ENCODE measurements at regions of chr10 and their contacts with region 1.

Region 1: DNA sequence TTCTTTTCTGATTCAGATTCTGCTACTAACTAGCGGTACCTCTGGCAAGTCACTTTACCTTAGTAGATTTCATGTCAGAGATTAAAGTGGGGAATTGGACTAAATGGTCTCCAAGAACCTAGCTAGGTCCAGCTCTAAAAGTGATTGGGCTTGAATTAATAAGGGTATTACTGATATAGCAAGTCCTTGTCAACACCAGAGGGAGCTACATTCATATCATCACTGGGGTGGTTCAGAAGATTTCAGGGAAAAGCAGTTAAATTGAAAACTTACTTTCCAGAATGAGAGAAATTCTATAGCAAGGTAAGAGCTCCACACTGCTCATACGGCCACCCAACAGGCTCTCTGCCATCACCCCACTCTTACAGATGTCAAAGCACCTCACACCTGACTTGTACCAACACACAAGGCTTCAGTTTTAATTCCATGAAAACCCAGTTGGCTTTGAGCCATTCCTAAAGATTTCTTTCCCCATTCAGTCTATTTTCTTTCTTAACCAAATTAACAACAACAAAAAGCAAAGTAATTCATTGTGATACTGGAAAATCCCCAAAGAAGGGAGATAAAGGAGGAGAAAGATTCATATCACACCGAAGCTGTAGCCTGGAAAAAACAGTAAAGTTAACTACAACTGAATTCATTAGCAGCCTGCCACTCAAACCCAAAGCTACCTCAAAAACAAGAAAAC is 38.0 kb upstream of the SPOCK2 start:
- DNase-seq: peak; percentile 29
- ATAC-seq: no peak
- H3K4me3 ChIP-seq: no peak overlapping the region
- H3K27ac ChIP-seq: no peak overlapping the region
- H3K4me1 ChIP-seq: no peaks in the 10 kb centered on the region
- H3K27me3 ChIP-seq: no peaks in the 10 kb centered on the region
- CTCF ChIP-seq: peak; percentile 27; the same call in 1 of the 2 replicates
- EP300 ChIP-seq: no peak
- POLR2A ChIP-seq: no peak
- RAD21 ChIP-seq: peak; percentile 34; the same call in 1 of the 2 replicates

Region 2: GRCh38 chr10:71999360-72000072 is 126.8 kb before region 1 on chr10:
- CTCF ChIA-PET with region 1: no interaction called
- POLR2A ChIA-PET with region 1: no interaction called
- in situ Hi-C with region 1: no loop called
- intact Hi-C with region 1: no loop called
- DNase-seq: no peak
- ATAC-seq: peak; percentile 8; the same call in 2 of the 3 replicates
- H3K4me3 ChIP-seq: no peak overlapping the region
- H3K27ac ChIP-seq: peak overlapping the region; percentile 11
- H3K4me1 ChIP-seq: peaks cover 45% of the 10 kb centered on the region
- H3K27me3 ChIP-seq: no peaks in the 10 kb centered on the region
- CTCF ChIP-seq: no peak
- EP300 ChIP-seq: no peak
- POLR2A ChIP-seq: no peak
- RAD21 ChIP-seq: no peak

Region 3: DNA sequence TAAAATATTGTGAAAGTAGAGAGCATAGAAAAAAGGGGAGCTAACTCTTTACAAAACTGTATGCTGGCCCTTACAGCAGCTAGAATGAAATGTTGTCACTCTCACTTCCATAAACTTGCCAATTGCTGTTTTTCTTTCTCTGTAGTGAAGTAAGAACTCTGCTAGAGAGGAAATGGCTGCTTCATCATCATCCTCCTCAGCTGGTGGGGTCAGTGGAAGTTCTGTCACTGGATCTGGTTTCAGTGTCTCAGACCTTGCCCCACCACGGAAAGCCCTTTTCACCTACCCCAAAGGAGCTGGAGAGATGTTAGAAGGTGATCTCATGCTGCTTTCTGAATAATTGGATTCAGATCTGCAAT is 97.4 kb after region 1 on chr10:
- CTCF ChIA-PET with region 1: interaction called, 3 read pairs
- POLR2A ChIA-PET with region 1: interaction called, 4 read pairs
- in situ Hi-C with region 1: no loop called
- intact Hi-C with region 1: loop called (anchors 10 kb)
- DNase-seq: no peak
- ATAC-seq: no peak
- H3K4me3 ChIP-seq: no peak overlapping the region
- H3K27ac ChIP-seq: no peak overlapping the region
- H3K4me1 ChIP-seq: peaks cover 20% of the 10 kb centered on the region
- H3K27me3 ChIP-seq: no peaks in the 10 kb centered on the region
- CTCF ChIP-seq: no peak
- EP300 ChIP-seq: no peak
- POLR2A ChIP-seq: no peak
- RAD21 ChIP-seq: no peak